ENCODE measurements at regions of chr4 and their contacts with region 1.

Region 1: GRCh38 chr4:83582289-83582769 is 46.4 kb downstream of the GPAT3 start:
- DNase-seq: no peak
- ATAC-seq: peak; percentile 63
- H3K4me3 ChIP-seq: peak overlapping the region in 3 of 5 experiments; percentile 16 to 45 (median 33)
- H3K4me3 Mint-ChIP-seq: peak overlapping the region; percentile 75
- H3K27ac ChIP-seq: peak overlapping the region; percentile 28 to 39
- H3K27ac Mint-ChIP-seq: peak overlapping the region; percentile 80
- H3K4me1 ChIP-seq: peaks cover 14 to 17% of the 10 kb centered on the region in 2 donors
- H3K4me1 Mint-ChIP-seq: peaks cover 19% of the 10 kb centered on the region
- H3K27me3 ChIP-seq: no peaks in the 10 kb centered on the region
- H3K27me3 Mint-ChIP-seq: no peaks in the 10 kb centered on the region
- CTCF ChIP-seq: peak; percentile 22

Region 2: GRCh38 chr4:83440899-83441298 is 141.4 kb before region 1 on chr4:
- CTCF ChIA-PET with region 1: no interaction called
- POLR2A ChIA-PET with region 1: no interaction called
- intact Hi-C with region 1: no loop called
- DNase-seq: peak; percentile 32
- ATAC-seq: no peak
- H3K4me3 ChIP-seq: no peak overlapping the region
- H3K4me3 Mint-ChIP-seq: peak overlapping the region; percentile 10
- H3K27ac ChIP-seq: peak overlapping the region; percentile 1 to 78
- H3K27ac Mint-ChIP-seq: peak overlapping the region; percentile 37
- H3K4me1 ChIP-seq: peaks cover 21 to 26% of the 10 kb centered on the region in 2 donors
- H3K4me1 Mint-ChIP-seq: peaks cover 31% of the 10 kb centered on the region
- H3K27me3 ChIP-seq: no peaks in the 10 kb centered on the region
- H3K27me3 Mint-ChIP-seq: no peaks in the 10 kb centered on the region
- CTCF ChIP-seq: no peak

Region 3: DNA sequence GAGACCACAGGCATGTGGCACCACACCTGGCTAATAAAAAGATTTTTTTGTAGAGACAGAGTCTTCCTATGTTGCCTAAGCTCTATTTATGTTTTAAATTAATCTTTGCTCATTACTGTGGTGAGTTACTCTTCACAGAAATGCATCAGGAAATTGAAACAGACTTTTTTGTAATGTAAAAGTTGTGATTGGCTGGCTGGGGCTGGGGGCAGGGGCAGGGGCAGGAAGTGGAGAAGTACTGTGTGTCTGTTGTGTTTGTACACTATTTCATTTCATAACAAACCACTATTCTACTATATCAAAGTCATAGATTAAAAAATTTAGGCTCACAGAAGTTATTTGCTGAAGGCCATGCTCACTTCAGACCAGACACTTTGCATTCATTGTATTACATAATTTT is 78.4 kb before region 1 on chr4:
- CTCF ChIA-PET with region 1: interaction called, 16 read pairs
- POLR2A ChIA-PET with region 1: no interaction called
- intact Hi-C with region 1: loop called (anchors 2 kb)
- DNase-seq: no peak
- ATAC-seq: no peak
- H3K4me3 ChIP-seq: no peak overlapping the region
- H3K4me3 Mint-ChIP-seq: no peak overlapping the region
- H3K27ac ChIP-seq: no peak overlapping the region
- H3K27ac Mint-ChIP-seq: no peak overlapping the region
- H3K4me1 ChIP-seq: no peaks in the 10 kb centered on the region
- H3K4me1 Mint-ChIP-seq: peaks cover 3% of the 10 kb centered on the region
- H3K27me3 ChIP-seq: no peaks in the 10 kb centered on the region
- H3K27me3 Mint-ChIP-seq: no peaks in the 10 kb centered on the region
- CTCF ChIP-seq: no peak

Region 4: GRCh38 chr4:83510442-83510841 is 71.9 kb before region 1 on chr4:
- CTCF ChIA-PET with region 1: interaction called, 16 read pairs
- POLR2A ChIA-PET with region 1: no interaction called
- intact Hi-C with region 1: loop called (anchors 2 kb)
- DNase-seq: no peak
- ATAC-seq: no peak
- H3K4me3 ChIP-seq: no peak overlapping the region
- H3K4me3 Mint-ChIP-seq: no peak overlapping the region
- H3K27ac ChIP-seq: no peak overlapping the region
- H3K27ac Mint-ChIP-seq: no peak overlapping the region
- H3K4me1 ChIP-seq: no peaks in the 10 kb centered on the region
- H3K4me1 Mint-ChIP-seq: no peaks in the 10 kb centered on the region
- H3K27me3 ChIP-seq: no peaks in the 10 kb centered on the region
- H3K27me3 Mint-ChIP-seq: no peaks in the 10 kb centered on the region
- CTCF ChIP-seq: no peak

Region 5: DNA sequence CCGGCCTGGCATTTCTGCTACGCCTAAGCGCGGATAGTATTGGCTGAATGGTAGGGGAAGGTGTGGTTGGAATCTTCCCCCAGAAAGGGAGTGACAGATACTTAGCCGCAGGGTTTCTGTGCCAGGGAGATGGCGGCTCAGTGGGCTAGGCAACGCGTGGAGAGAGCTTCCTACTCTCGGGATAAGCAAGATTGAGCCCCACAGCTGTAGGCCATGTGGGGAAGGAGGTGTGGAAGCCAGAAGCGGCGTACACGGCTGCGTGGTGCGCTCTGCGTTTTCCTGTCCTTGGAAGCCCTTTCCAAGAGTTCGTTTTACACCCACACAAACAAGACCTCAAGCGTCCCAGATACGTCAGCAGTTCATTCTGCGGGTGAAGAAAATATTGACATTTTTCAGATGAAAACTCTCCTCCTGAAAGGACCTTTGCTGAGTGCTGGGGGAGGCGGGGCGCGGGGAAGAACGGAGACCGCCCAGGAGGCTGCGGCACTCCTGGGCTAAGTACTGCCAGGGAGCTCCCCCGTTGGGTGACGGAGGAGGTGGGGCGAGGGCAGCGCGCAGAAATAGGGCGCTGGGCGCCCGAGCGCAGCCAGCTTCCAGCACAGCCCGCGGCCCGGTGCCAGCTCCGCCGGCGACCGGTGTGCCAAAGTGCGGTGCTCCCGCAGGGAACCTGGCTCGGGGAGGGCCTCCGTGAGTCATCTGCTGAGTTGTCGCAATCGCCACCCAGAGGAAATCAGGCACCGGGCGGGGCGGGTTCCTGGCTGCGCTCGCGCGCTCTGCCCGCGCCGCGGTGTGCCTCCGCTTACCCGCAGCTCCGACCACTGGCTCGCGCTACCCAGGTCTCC is 46.6 kb before region 1 on chr4 and contains the start of gene GPAT3:
- CTCF ChIA-PET with region 1: no interaction called
- POLR2A ChIA-PET with region 1: no interaction called
- intact Hi-C with region 1: loop called (anchors 2 kb)
- DNase-seq: peak; percentile 64
- ATAC-seq: peak; percentile 81
- H3K4me3 ChIP-seq: peak within 1 kb of the TSS; percentile 47 to 76 (median 68)
- H3K4me3 Mint-ChIP-seq: peak within 1 kb of the TSS; percentile 90
- H3K27ac ChIP-seq: no peak within 1 kb of the TSS
- H3K27ac Mint-ChIP-seq: peak within 1 kb of the TSS; percentile 57
- H3K4me1 ChIP-seq: peaks cover 14 to 18% of the 10 kb centered on the region in 2 donors
- H3K4me1 Mint-ChIP-seq: peaks cover 20% of the 10 kb centered on the region
- H3K27me3 ChIP-seq: peaks cover 0 to 34% (median 18%) of the 10 kb centered on the region in 4 experiments
- H3K27me3 Mint-ChIP-seq: peaks cover 38% of the 10 kb centered on the region
- CTCF ChIP-seq: no peak
- total RNA-seq, gene GPAT3: 0.89 and 1.0 TPM in 2 replicates